ENCODE measurements at regions of chr2 and their contacts with region 1.

Region 1: DNA sequence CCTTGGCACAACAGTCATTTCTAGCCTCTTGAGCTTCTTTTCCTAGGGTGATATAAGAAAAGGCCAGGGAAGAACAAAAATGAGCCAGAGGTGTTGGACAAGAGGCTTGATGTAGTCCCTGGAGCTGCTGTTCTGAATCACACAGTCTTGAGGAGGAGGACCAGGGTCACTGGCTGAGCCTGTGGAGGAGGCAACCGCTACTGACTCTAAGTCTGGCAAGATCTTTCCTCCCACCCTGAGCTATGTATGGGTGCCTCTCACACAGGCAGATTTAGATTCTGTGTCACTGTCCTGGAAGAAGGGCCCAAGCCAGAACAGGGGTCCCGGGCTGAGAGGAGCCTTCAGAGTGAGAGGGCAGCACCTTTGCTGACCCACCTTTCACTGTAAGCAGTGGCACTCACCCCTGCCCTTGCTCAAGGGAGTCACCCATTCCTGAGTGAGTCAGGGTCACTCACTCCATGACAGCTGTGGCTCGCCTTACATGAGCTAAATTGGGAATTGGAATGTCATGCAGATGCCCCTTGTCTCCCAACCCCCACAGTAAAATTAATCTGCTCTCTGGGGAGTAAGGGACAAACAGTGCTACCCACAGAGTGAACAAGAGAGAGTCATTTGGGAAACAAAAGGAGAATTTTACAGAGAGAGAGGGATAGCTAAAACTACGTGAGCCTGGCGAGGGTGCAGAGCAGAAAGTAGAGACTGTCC is at the start of gene TRIM54:
- DNase-seq: peak in 1 of 2 donors; percentile 63
- ATAC-seq: peak; percentile 75 to 91 (median 88)
- H3K4me3 ChIP-seq: peak within 1 kb of the TSS; percentile 30 to 69 (median 56)
- H3K27ac ChIP-seq: peak within 1 kb of the TSS; percentile 85 to 97 (median 92)
- H3K4me1 ChIP-seq: peaks cover 0 to 32% (median 18%) of the 10 kb centered on the region in 9 donors
- H3K27me3 ChIP-seq: peaks cover 0 to 15% (median 4%) of the 10 kb centered on the region in 7 donors
- CTCF ChIP-seq: no peak
- total RNA-seq, gene TRIM54: 204 to 303 (median 249) TPM

Region 2: GRCh38 chr2:26970244-26970920 is 311.6 kb before region 1 on chr2 and contains the start of gene MAPRE3:
- intact Hi-C with region 1: loop called in 2 of 10 experiments (anchors 10 kb)
- DNase-seq: peak; percentile 77 to 86
- ATAC-seq: peak; percentile 93 to 96 (median 94)
- H3K4me3 ChIP-seq: peak within 1 kb of the TSS; percentile 68 to 95 (median 86)
- H3K27ac ChIP-seq: peak within 1 kb of the TSS in 9 of 10 donors; percentile 68 to 84 (median 81)
- H3K4me1 ChIP-seq: peaks cover 3 to 33% (median 26%) of the 10 kb centered on the region in 9 donors
- H3K27me3 ChIP-seq: peaks cover 0 to under 1% (median 0%) of the 10 kb centered on the region in 7 donors
- CTCF ChIP-seq: no peak
- total RNA-seq, gene MAPRE3: 34.9 to 62.0 (median 47.2) TPM

Region 3: GRCh38 chr2:27003857-27004256 is 278.1 kb before region 1 on chr2:
- intact Hi-C with region 1: no loop called
- DNase-seq: no peak
- ATAC-seq: peak in 1 of 8 donors; percentile 39
- H3K4me3 ChIP-seq: no peak overlapping the region
- H3K27ac ChIP-seq: no peak overlapping the region
- H3K4me1 ChIP-seq: peaks cover 0 to 18% (median 8%) of the 10 kb centered on the region in 9 donors
- H3K27me3 ChIP-seq: no peaks in the 10 kb centered on the region
- CTCF ChIP-seq: no peak

Region 4: GRCh38 chr2:27102329-27102728 is 179.7 kb before region 1 on chr2:
- intact Hi-C with region 1: loop called in 6 of 10 experiments (anchors 1 to 5 kb)
- DNase-seq: no peak
- ATAC-seq: no peak
- H3K4me3 ChIP-seq: no peak overlapping the region
- H3K27ac ChIP-seq: no peak overlapping the region
- H3K4me1 ChIP-seq: no peaks in the 10 kb centered on the region
- H3K27me3 ChIP-seq: peaks cover 0 to 20% (median 2%) of the 10 kb centered on the region in 7 donors
- CTCF ChIP-seq: no peak

Region 5: GRCh38 chr2:27243391-27244130 is 38.4 kb before region 1 on chr2:
- intact Hi-C with region 1: loop called in 2 of 10 experiments (anchors 2 to 5 kb)
- DNase-seq: no peak
- ATAC-seq: peak in 7 of 8 donors; percentile 25 to 60 (median 48)
- H3K4me3 ChIP-seq: no peak overlapping the region
- H3K27ac ChIP-seq: peak overlapping the region in 3 of 10 donors; percentile 19 to 67 (median 41)
- H3K4me1 ChIP-seq: peaks cover 0 to 34% (median 13%) of the 10 kb centered on the region in 9 donors
- H3K27me3 ChIP-seq: no peaks in the 10 kb centered on the region
- CTCF ChIP-seq: no peak

Region 6: DNA sequence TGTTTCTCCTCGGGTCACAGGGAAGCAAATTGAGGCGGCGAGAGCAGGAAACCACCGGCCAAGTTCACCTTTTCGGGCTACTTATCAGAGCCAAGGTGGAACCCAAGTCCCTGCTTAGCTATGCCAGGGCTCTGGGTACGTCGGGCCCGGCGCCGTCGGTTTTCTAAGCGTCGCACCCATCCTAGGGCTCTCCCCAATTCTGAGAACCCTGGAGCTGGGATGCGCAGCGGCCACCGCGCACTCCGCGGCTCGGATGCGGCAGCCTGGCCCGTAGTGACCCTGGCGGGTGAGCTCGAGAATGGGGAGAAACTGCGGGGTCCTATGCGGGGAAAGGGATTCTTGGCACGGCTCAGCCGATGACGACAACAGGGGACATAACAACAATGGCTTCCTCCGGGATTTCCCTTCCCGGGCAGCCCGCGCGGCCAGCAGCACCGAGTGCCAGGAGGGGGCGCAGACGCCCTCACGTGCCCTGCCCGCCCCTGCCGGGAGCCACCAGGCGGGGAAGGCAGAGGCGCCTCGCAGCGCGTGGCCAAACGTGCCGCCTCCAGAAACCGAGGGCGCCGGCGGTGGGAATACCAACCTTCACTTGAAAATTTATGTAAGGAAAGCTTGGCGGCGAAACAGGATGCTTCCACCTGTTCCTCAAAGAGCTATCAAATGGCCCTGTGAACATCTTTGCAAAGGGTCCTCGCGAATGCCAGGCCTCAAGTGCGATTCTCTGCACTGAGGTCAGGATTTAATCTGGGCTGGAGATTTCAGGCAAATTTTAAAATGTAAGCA is 17.1 kb before region 1 on chr2:
- intact Hi-C with region 1: loop called in 1 of 10 experiments (anchors 1 kb)
- DNase-seq: peak; percentile 71 to 77
- ATAC-seq: peak; percentile 68 to 88 (median 80)
- H3K4me3 ChIP-seq: peak overlapping the region in 9 of 10 donors; percentile 30 to 68 (median 63)
- H3K27ac ChIP-seq: peak overlapping the region in 8 of 10 donors; percentile 34 to 77 (median 48)
- H3K4me1 ChIP-seq: peaks cover 0 to 47% (median 34%) of the 10 kb centered on the region in 9 donors
- H3K27me3 ChIP-seq: peaks cover 0 to 97% (median 52%) of the 10 kb centered on the region in 7 donors
- CTCF ChIP-seq: peak in 8 of 9 donors; percentile 30 to 74 (median 57)

Region 7: DNA sequence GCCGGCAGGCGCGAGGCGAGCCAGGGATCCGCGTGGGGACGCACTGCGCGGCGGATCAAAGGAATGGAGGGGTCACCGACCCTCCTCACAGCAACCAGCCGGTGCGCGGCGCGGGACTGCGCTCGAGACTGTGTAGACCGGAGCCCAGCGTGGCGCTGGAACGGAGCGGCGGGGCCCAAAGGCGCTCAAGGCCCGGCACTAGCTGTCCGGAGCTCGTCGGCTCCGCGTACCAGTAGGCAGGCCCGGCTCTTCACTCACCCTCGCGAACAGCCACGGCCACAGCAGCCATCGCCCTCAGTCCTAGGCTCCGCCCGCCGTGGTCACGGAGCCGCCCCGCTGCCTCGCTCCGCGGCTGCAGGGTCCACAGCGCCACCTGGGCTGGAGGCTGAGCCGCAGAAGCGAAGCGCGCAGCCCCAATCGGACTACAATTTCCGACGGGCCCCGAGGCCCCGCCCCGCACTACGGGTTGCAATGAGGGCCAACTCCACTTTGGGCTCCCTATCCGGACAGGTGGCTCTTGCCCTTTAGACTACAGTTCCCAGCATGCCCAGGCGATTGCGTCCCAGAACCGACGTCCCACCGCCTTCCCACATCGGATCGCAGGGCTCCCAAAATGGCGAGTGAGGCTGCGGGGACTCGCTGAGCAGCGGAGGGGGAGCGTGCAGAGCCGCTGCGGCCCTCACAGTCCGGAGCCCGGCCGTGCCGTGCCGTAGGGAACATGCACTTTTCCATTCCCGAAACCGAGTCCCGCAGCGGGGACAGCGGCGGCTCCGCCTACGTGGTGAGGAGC is 88.2 kb after region 1 on chr2 and contains the starts of genes EIF2B4 and SNX17:
- intact Hi-C with region 1: no loop called
- DNase-seq: peak; percentile 99 to 100
- ATAC-seq: peak; percentile 94 to 97 (median 96)
- H3K4me3 ChIP-seq: peak within 1 kb of the TSS; percentile 54 to 99 (median 92)
- H3K27ac ChIP-seq: peak within 1 kb of the TSS; percentile 77 to 96 (median 93)
- H3K4me1 ChIP-seq: peaks cover 7 to 39% (median 32%) of the 10 kb centered on the region in 9 donors
- H3K27me3 ChIP-seq: no peaks in the 10 kb centered on the region
- CTCF ChIP-seq: peak; percentile 22 to 95 (median 75)
- total RNA-seq, gene EIF2B4: 26.4 to 47.9 (median 34.7) TPM
- total RNA-seq, gene SNX17: 54.5 to 82.5 (median 68.8) TPM